BJ (cell line): ENCODE measurements at regions of chr3 and their contacts with region 1.

Region 1: GRCh38 chr3:189961525-189962161 is 159.1 kb downstream of the P3H2 start:
- DNase-seq: no peak
- H3K4me3 ChIP-seq: no peak overlapping the region
- H3K27me3 ChIP-seq: no peaks in the 10 kb centered on the region
- CTCF ChIP-seq: peak; percentile 88

Region 2: GRCh38 chr3:189602471-189602870 is 359.2 kb before region 1 on chr3:
- CTCF ChIA-PET with region 1: no interaction called
- POLR2A ChIA-PET with region 1: no interaction called
- DNase-seq: no peak
- H3K4me3 ChIP-seq: no peak overlapping the region
- H3K27me3 ChIP-seq: no peaks in the 10 kb centered on the region
- CTCF ChIP-seq: no peak

Region 3: DNA sequence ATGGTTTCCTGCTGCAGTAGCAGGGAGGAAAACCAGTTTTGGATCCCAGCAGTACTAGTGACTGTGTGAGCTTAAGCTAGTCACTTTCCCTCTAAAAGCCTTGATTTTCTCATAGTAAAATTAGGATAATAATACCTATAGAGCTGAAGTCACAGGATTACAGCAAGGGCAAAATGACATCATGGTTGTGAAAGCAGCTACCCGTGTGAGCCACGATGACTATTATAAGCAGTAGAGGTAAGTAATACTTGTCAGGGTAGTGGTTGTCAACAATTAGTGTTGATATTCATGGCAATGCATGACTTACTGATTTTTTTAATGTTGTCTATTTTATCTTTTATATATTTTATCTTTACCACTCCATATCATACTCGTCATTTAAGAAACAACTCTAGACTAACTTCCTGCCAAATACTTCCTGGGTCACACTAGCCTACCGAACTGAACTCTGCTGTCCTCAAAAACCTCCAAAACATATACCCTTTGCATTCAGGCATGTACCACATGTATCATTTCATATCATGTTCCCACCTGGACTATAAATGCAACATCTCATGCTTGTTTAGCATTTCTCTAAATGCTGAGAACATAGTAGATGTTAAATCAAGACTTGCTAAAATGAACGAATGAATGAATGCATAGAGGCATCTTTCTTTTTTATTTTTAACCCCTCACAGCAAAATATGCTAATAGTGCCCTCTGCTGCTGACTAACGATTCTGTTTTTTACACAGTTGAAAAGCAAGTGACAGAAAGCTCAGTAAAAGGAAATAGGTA is 13.5 kb before region 1 on chr3:
- CTCF ChIA-PET with region 1: interaction called, 46 read pairs
- POLR2A ChIA-PET with region 1: no interaction called
- DNase-seq: no peak
- H3K4me3 ChIP-seq: no peak overlapping the region
- H3K27me3 ChIP-seq: peaks cover 20% of the 10 kb centered on the region
- CTCF ChIP-seq: peak; percentile 59

Region 4: GRCh38 chr3:190120269-190121060 is 158.8 kb after region 1 on chr3 and contains the start of gene P3H2:
- CTCF ChIA-PET with region 1: interaction called, 18 read pairs
- POLR2A ChIA-PET with region 1: no interaction called
- DNase-seq: no peak
- H3K4me3 ChIP-seq: peak within 1 kb of the TSS; percentile 81
- H3K27me3 ChIP-seq: no peaks in the 10 kb centered on the region
- CTCF ChIP-seq: peak; percentile 76
- polyA plus RNA-seq, gene P3H2: 13.5 and 24.1 TPM in 2 replicates

Region 5: GRCh38 chr3:190321789-190322603 is 360.4 kb after region 1 on chr3 and contains the start of gene CLDN1:
- CTCF ChIA-PET with region 1: interaction called, 40 read pairs
- POLR2A ChIA-PET with region 1: no interaction called
- DNase-seq: no peak
- H3K4me3 ChIP-seq: peak within 1 kb of the TSS; percentile 61
- H3K27me3 ChIP-seq: no peaks in the 10 kb centered on the region
- CTCF ChIP-seq: peak; percentile 78
- polyA plus RNA-seq, gene CLDN1: 1.3 and 1.7 TPM in 2 replicates

Region 6: DNA sequence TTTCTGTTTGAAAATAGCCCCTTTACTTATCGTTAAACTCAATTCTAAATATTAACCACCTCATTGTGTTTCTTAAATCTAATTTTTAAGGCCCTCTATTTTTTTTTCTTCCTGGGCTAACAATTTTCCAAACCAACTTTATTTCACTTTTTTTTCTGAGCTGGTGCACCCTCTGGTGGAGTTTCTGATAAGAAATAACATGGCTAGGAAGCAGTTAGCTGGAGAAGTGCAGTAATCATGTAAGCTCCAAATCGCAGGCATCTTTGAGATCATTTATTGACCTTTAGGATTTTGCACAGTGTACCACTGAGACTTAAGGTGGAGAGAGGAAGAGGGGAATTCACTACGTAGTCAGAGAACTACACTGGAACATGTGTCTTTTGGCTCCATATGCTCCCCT is 481.6 kb after region 1 on chr3:
- CTCF ChIA-PET with region 1: interaction called, 10 read pairs
- POLR2A ChIA-PET with region 1: no interaction called
- DNase-seq: no peak
- H3K4me3 ChIP-seq: no peak overlapping the region
- H3K27me3 ChIP-seq: no peaks in the 10 kb centered on the region
- CTCF ChIP-seq: peak; percentile 43